Right cardiac atrium (tissue), 5 donors: ENCODE measurements at regions of chr5 and their contacts with region 1.

Region 1: DNA sequence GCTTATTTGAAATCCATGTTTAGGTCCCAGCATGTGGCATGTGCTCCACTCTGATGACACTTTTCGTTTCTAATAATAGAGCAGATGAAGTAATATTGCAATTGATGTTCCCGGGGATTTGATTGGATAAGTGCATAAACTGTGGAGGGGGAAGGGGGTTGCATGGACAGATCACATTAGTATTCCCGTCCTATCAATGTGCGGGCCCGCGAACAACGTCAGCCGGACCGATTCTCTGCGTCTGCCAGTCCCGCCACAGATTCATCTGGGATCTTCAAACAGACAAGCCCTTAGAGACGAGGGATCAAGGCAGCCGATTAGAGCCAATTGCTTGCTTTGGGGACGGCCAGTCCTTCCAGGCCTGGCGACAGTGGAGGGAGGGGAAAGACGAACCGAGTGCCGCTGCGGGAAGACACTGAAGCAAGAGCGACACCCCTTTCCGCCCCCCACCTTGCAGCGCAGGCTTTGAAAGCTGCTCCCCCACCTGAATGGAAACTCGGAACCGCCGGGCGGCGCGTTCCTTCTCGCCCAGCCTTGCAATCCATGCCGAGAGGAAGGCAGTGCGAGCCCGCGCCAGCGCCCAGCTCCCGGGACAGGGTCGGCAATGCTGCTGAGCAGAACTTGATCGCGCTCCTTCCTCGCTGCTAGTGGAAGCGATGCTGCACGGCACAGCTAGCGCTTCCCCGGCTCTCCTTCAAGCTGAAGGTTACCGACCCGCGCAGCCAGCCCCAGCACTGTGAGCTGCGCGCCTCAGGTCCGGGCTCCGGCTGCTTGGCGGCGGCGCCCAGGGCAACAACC is at the start of gene RGS7BP:
- DNase-seq: peak; percentile 37 to 84 (median 84)
- ATAC-seq: peak; percentile 92 to 94
- H3K4me3 ChIP-seq: peak within 1 kb of the TSS; percentile 60
- H3K27ac ChIP-seq: peak within 1 kb of the TSS; percentile 42
- H3K4me1 ChIP-seq: no peaks in the 10 kb centered on the region
- H3K27me3 ChIP-seq: no peaks in the 10 kb centered on the region
- total RNA-seq, gene RGS7BP: 1.7 to 8.9 (median 8.1) TPM

Region 2: GRCh38 chr5:64147849-64148441 is 358.0 kb before region 1 on chr5:
- intact Hi-C with region 1: loop called in 1 of 4 experiments (anchors 10 kb)
- DNase-seq: peak; percentile 71 to 84 (median 84)
- ATAC-seq: peak; percentile 71 to 76
- H3K4me3 ChIP-seq: no peak overlapping the region
- H3K27ac ChIP-seq: no peak overlapping the region
- H3K4me1 ChIP-seq: no peaks in the 10 kb centered on the region
- H3K27me3 ChIP-seq: no peaks in the 10 kb centered on the region

Region 3: DNA sequence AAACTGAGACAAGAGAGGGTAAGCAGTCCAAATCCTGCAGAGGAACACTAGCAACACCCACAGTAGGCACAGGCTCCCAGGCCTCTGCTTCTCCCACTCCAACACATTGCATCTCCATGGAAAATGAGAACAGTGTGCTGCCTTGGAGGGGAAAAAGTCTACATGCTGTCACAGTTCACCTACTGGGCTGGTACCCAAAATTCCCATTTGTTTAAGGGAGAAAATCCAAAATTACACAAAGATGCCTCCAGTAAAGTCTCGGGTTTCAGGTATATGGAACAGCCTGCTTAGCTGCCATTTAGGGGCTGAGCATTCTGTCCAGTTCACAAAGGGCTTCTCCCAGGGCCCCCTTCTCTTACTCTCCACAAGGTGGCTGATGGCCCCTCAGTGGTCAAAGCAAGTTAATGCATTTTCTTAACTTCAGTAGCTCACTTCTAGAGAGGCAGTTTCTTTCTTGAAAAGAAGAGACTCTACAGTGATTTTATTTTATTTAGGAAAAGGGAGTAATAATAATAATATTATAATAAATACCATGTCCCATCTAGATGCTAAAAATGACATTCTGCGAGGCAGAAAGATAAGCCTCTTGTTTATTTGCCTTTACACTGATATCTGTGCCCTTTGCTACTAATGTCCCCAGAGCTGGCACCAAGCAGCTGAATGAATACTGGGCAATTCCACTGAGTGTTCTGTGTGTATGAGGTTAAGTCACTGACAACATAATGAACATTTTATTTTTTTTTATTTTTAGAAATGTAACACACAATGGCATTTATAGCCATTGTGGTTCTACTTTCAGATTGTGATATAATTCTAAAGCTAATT is 89.3 kb after region 1 on chr5:
- intact Hi-C with region 1: loop called (anchors 5 to 10 kb)
- DNase-seq: peak in 2 of 3 donors; percentile 13 to 66
- ATAC-seq: peak; percentile 75 to 85
- H3K4me3 ChIP-seq: no peak overlapping the region
- H3K27ac ChIP-seq: peak overlapping the region; percentile 36
- H3K4me1 ChIP-seq: peaks cover 2% of the 10 kb centered on the region
- H3K27me3 ChIP-seq: no peaks in the 10 kb centered on the region

Region 4: GRCh38 chr5:64603676-64604075 is 97.7 kb after region 1 on chr5:
- intact Hi-C with region 1: loop called in 3 of 4 experiments (anchors 5 to 10 kb)
- DNase-seq: no peak
- ATAC-seq: no peak
- H3K4me3 ChIP-seq: no peak overlapping the region
- H3K27ac ChIP-seq: no peak overlapping the region
- H3K4me1 ChIP-seq: no peaks in the 10 kb centered on the region
- H3K27me3 ChIP-seq: no peaks in the 10 kb centered on the region

Region 5: GRCh38 chr5:64869419-64869818 is 363.5 kb after region 1 on chr5:
- intact Hi-C with region 1: no loop called
- DNase-seq: no peak
- ATAC-seq: peak in 1 of 2 donors; percentile 37
- H3K4me3 ChIP-seq: no peak overlapping the region
- H3K27ac ChIP-seq: no peak overlapping the region
- H3K4me1 ChIP-seq: no peaks in the 10 kb centered on the region
- H3K27me3 ChIP-seq: no peaks in the 10 kb centered on the region